ENCODE measurements at regions of chr15 and their contacts with region 1.

Region 1: DNA sequence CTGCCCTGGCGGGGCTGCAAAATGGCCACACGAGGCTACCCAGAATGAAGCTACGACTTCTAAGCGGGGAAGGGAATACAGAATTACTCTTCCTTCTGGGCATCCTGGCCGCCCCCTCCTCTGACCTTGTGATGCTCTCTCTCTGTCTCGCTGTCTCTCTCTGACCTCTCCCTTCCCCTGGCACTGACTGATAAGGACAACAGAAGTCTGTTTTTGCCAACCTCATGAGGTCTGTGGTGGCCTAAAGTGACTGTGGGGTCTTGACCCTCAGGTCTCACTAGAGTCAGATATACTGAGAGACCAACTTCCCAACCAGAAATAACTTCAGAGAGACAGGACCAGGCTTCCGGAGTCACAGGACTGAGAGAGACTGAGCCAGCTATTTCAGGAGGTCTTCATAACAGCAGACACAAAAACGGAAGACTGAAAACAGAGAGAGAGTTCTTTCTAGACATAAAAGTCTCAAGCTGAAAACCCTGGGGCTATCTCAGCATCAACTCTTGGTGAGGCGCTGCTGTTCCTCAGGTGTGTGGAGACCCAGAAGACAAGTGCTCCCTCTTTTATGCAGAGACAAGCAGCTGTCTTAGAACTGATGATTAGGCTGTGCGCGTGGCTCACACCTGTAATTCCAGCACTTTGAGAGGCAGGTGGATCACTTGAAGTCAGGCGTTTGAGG is 38.2 kb upstream of the CFAP161 start:
- DNase-seq: no peak
- ATAC-seq: no peak
- H3K4me3 ChIP-seq: no peak overlapping the region
- H3K27ac ChIP-seq: no peak overlapping the region
- H3K4me1 ChIP-seq: peaks cover 9% of the 10 kb centered on the region
- H3K27me3 ChIP-seq: peaks cover 3% of the 10 kb centered on the region; the same call in 1 of the 2 replicates
- CTCF ChIP-seq: no peak

Region 2: GRCh38 chr15:81071120-81071519 is 24.7 kb before region 1 on chr15:
- CTCF ChIA-PET with region 1: no interaction called
- POLR2A ChIA-PET with region 1: interaction called, 13 read pairs
- in situ Hi-C with region 1: no loop called
- intact Hi-C with region 1: no loop called
- DNase-seq: no peak
- ATAC-seq: no peak
- H3K4me3 ChIP-seq: no peak overlapping the region
- H3K27ac ChIP-seq: no peak overlapping the region
- H3K4me1 ChIP-seq: no peaks in the 10 kb centered on the region
- H3K27me3 ChIP-seq: no peaks in the 10 kb centered on the region
- CTCF ChIP-seq: no peak

Region 3: GRCh38 chr15:81296673-81297072 is 200.8 kb after region 1 on chr15:
- CTCF ChIA-PET with region 1: no interaction called
- POLR2A ChIA-PET with region 1: no interaction called
- in situ Hi-C with region 1: no loop called
- intact Hi-C with region 1: no loop called
- DNase-seq: no peak
- ATAC-seq: no peak
- H3K4me3 ChIP-seq: no peak overlapping the region
- H3K27ac ChIP-seq: no peak overlapping the region
- H3K4me1 ChIP-seq: no peaks in the 10 kb centered on the region
- H3K27me3 ChIP-seq: peaks cover 4% of the 10 kb centered on the region; the same call in 1 of the 2 replicates
- CTCF ChIP-seq: no peak

Measured in Panc1 (cell line).